ENCODE measurements at regions of chr19 and their contacts with region 1.

Region 1: GRCh38 chr19:54168174-54168917 is 4.6 kb downstream of the TMC4 start:
- DNase-seq: peak; percentile 88 to 97 (median 94)
- H3K4me3 ChIP-seq: no peak overlapping the region
- H3K27ac ChIP-seq: no peak overlapping the region
- H3K4me1 ChIP-seq: peaks cover 6 to 13% of the 10 kb centered on the region in 2 donors
- H3K27me3 ChIP-seq: no peaks in the 10 kb centered on the region
- CTCF ChIP-seq: peak; percentile 71 to 91 (median 84)
- POLR2A ChIP-seq: no peak

Region 2: DNA sequence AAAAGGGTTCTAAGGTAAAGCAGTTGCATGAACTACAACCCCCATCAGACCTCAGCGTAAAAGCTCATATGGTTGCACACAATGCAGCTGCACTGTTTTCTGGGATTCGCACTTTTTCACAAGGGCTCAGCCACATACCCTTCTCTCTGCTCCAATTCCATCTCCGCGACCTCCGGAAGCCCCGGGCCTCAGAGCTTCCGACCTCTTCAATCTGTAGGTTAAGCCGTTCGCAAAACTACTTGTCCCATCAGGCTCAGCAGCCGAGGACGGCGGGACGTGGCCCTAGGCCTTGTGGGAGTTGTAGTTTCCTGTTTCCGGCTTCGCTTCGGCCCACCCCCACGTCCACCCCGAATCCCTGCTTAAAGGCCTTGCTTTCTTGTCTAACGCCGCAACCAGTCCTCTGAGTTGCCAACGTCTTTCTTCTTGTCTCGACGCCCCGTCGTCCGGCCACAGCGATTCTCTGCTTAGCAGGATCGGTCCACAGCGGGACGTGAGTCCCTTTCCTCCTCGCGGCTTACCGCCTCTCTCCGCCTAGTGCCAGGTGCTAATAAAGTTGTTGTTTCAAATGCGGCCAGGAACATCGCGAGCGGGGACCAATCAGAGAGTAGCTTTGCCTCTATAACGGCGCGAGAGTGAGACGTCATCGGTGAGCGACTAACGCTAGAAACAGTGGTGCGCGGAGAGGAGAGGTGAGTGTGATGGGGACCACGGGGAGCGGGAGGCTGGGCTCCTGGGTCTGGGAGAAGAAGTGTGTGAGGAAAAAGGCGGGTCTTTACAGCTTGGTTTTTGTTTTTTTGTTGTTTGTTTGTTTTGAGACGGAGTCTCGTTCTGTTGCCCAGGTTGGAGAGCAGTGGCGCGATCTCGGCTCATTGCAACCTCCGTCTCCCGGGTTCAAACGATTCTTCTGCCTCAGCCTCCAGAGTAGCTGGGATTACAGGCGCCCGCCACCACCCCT is 53.0 kb before region 1 on chr19 and contains the starts of genes PRPF31 and TFPT:
- intact Hi-C with region 1: no loop called
- DNase-seq: peak; percentile 95 to 99 (median 98)
- H3K4me3 ChIP-seq: peak within 1 kb of the TSS; percentile 52 to 81 (median 72)
- H3K27ac ChIP-seq: peak within 1 kb of the TSS; percentile 73 to 94 (median 84)
- H3K4me1 ChIP-seq: peaks cover 22 to 23% of the 10 kb centered on the region in 2 donors
- H3K27me3 ChIP-seq: no peaks in the 10 kb centered on the region
- CTCF ChIP-seq: no peak
- POLR2A ChIP-seq: peak; percentile 57 to 62
- total RNA-seq, gene PRPF31: 36.1 to 72.5 (median 49.5) TPM
- total RNA-seq, gene TFPT: 19.5 to 28.0 (median 24.1) TPM

Region 3: DNA sequence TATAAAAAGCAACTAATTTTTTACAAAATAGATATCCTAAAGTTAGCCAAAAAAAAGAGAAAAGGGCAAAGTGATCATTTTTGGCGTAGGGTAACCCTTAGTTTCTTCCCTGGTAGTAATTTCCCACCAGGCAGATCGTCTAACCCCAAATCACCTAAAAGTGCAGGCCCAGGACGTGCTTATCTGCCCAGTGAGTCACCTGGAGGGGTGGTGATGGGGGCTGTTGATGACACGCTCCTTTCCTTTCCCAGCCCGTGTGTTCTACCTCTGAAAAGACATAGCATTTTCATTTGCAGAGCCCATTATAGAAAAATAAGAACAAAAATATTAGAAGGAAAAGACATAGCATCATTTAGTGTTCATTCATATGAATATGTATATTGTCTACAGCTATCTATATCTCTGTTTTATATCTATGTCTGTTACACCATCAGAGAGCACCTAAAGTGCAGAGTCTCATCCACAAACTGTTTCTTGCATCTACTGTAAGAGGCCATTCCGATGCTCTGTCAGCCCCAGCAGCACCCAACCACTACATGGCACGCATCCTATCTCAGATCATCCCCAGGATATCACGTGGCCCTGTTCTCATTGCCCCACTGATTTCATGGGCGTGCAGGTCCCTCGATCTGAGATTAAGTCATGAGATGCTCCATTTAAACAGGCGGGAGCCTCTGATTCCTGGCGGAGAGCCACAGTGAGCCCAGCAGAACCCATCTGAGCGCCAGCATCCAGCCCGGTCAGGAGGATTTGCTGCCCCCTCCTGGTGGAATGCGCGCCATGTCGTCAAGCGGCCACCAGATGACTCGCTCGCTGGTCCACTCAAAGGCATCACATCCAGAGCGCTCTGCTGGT is 63.0 kb after region 1 on chr19:
- intact Hi-C with region 1: loop called (anchors 2 to 5 kb)
- DNase-seq: peak; percentile 86 to 95 (median 91)
- H3K4me3 ChIP-seq: no peak overlapping the region
- H3K27ac ChIP-seq: no peak overlapping the region
- H3K4me1 ChIP-seq: peaks cover 0 to 6% of the 10 kb centered on the region in 2 donors
- H3K27me3 ChIP-seq: no peaks in the 10 kb centered on the region
- CTCF ChIP-seq: peak; percentile 84 to 94 (median 90)
- POLR2A ChIP-seq: no peak

Region 4: GRCh38 chr19:54287456-54287855 is 119.1 kb after region 1 on chr19:
- intact Hi-C with region 1: no loop called
- DNase-seq: no peak
- H3K4me3 ChIP-seq: no peak overlapping the region
- H3K27ac ChIP-seq: no peak overlapping the region
- H3K4me1 ChIP-seq: no peaks in the 10 kb centered on the region
- H3K27me3 ChIP-seq: no peaks in the 10 kb centered on the region
- CTCF ChIP-seq: no peak
- POLR2A ChIP-seq: no peak

Measured in adrenal gland (tissue), 19 donors.